Caco-2 (cell line): ENCODE measurements at regions of chr11 and their contacts with region 1.

Region 1: DNA sequence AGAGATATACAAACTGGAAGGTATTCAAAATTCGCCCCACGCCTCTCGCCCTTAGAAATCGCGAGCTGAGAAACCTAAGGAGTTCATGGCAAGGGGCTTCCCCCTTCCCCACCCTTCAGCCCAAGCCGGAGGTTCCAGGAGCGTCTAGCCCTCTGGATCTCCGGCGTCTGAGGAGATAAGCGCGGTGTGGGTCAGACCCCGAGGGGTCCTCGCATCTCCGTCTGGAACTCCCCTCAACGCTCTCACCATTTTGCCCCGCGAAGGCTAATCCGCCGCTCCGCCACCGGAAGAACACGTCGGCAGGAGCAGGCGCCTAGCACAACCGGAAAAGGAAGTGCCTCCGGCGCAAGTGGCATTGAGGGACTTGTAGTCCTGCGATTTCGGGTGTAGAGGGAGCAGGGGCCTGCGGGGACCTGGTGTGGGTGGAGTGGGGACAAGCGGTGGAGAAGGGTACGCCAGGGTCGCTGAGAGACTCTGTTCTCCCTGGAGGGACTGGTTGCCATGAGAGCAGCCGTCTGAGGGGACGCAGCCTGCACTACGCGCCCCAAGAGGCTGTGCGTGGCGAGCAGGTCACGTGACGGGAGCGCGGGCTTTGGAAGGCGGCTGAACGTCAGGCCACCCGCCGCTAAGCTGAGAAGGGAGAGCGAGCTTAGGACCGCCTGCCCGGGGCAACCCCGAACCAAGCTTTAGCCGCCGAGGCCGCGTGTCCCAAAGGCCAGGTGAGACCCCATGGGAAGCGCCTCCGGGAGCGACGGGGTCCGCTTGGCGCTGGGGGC is at the starts of genes FEN1 and TMEM258:
- DNase-seq: peak; percentile 90 to 91
- H3K4me3 ChIP-seq: peak within 1 kb of the TSS; percentile 54
- H3K4me3 Mint-ChIP-seq: peak within 1 kb of the TSS; percentile 96
- H3K27ac Mint-ChIP-seq: peak within 1 kb of the TSS; percentile 100
- H3K4me1 ChIP-seq: peaks cover 5% of the 10 kb centered on the region; the same call in 1 of the 2 replicates
- H3K4me1 Mint-ChIP-seq: peaks cover 21% of the 10 kb centered on the region
- H3K27me3 ChIP-seq: no peaks in the 10 kb centered on the region
- H3K27me3 Mint-ChIP-seq: no peaks in the 10 kb centered on the region
- CTCF ChIP-seq: no peak
- total RNA-seq, gene FEN1: 83.4 and 86.1 TPM in 2 replicates
- total RNA-seq, gene TMEM258: 190 and 197 TPM in 2 replicates

Region 2: GRCh38 chr11:61747192-61747966 is 45.1 kb before region 1 on chr11:
- CTCF ChIA-PET with region 1: interaction called, 78 read pairs
- POLR2A ChIA-PET with region 1: interaction called, 4 read pairs
- intact Hi-C with region 1: loop called (anchors 1 kb)
- DNase-seq: peak; percentile 86 to 92
- H3K4me3 ChIP-seq: no peak overlapping the region
- H3K4me3 Mint-ChIP-seq: no peak overlapping the region
- H3K27ac Mint-ChIP-seq: no peak overlapping the region
- H3K4me1 ChIP-seq: peaks cover 22% of the 10 kb centered on the region
- H3K4me1 Mint-ChIP-seq: peaks cover 7% of the 10 kb centered on the region
- H3K27me3 ChIP-seq: no peaks in the 10 kb centered on the region
- H3K27me3 Mint-ChIP-seq: no peaks in the 10 kb centered on the region
- CTCF ChIP-seq: peak; percentile 93 to 97

Region 3: DNA sequence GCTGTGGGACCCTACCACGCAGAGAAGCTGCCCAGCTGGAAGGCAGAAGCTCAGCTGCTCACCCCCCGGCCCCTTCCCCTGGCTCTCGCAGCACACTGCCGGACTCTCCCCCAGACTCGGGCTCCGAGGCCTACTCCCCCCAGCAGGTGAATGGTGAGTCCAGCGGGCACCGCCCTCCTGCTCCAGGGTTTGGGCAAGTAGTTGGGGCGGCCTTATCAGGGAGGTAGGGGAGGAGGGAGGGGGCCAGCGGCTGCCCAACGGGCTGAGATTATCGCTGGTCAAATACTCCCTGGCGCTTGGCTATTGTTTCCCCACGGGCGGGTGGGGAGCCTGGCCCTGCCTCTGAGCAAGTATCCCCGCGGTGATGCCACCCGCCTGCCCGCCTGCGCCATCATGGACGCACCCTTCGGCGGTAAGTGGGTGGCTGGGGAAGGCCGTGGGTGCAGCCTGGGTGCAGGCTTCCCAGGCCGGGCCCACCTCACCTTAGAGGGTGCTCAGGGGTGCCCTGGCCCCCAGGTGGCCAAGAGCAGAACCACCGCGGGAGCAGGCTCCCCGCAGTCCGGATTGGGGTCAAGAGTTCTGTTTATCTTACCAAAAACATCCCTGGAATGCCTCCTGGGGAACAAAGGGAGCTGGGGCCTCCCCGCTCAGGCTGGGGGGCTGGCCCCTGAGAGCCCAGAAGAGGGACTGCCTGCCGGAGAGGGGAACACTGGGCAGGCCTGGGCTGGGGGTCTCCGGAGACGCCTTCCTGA is 23.2 kb before region 1 on chr11:
- CTCF ChIA-PET with region 1: interaction called, 28 read pairs
- POLR2A ChIA-PET with region 1: interaction called, 7 read pairs
- intact Hi-C with region 1: no loop called
- DNase-seq: peak; percentile 91 to 92
- H3K4me3 ChIP-seq: peak overlapping the region; percentile 1; the same call in 1 of the 2 replicates
- H3K4me3 Mint-ChIP-seq: peak overlapping the region; percentile 63
- H3K27ac Mint-ChIP-seq: peak overlapping the region; percentile 87
- H3K4me1 ChIP-seq: peaks cover 59% of the 10 kb centered on the region
- H3K4me1 Mint-ChIP-seq: peaks cover 21% of the 10 kb centered on the region
- H3K27me3 ChIP-seq: no peaks in the 10 kb centered on the region
- H3K27me3 Mint-ChIP-seq: no peaks in the 10 kb centered on the region
- CTCF ChIP-seq: peak; percentile 66 to 89

Region 4: DNA sequence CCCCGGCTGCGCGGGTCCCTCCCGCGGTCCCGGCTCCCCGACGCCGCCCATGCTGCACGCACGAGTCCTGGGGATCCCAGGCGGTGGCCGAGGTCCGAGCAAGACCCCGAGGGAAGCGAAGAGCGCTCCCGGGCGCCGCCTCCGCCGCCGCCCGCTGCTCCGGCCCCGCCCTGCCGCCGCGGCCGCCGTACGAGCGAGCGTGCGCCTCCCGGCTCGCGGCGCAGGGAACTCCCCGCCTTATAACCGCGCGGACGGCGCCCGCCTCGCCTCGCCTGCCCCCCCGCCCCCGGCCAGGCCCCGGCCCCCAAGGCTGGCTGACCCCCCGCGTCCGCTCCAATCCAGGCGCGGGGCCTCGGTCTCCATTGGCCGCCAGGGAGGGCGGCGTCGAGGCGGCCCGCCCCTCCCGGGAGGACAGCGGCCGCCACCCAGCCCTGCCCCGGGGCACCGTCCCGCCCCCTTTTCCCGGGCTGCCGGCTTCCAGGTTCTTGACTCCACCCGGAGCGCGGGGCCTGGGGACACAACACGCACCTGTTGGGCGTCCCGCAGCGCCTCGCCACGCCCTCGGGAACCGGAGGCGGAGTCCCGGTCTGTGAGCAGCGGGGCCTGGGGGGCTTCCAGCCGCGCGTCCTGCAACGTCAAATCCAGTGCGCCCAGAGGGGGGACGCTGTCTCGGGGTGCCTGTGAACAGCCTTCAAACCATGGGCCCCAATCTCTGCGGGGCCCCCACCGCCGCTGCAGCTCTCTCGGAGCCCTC is 99.0 kb after region 1 on chr11 and contains the start of gene FADS3:
- CTCF ChIA-PET with region 1: interaction called, 4 read pairs
- POLR2A ChIA-PET with region 1: no interaction called
- intact Hi-C with region 1: loop called (anchors 1 kb)
- DNase-seq: peak; percentile 92 to 96
- H3K4me3 ChIP-seq: peak within 1 kb of the TSS; percentile 90
- H3K4me3 Mint-ChIP-seq: peak within 1 kb of the TSS; percentile 91
- H3K27ac Mint-ChIP-seq: peak within 1 kb of the TSS; percentile 64
- H3K4me1 ChIP-seq: peaks cover 8% of the 10 kb centered on the region
- H3K4me1 Mint-ChIP-seq: no peaks in the 10 kb centered on the region
- H3K27me3 ChIP-seq: no peaks in the 10 kb centered on the region
- H3K27me3 Mint-ChIP-seq: no peaks in the 10 kb centered on the region
- CTCF ChIP-seq: peak in 1 of 2 experiments; percentile 32
- total RNA-seq, gene FADS3: 26.1 and 32.7 TPM in 2 replicates

Region 5: GRCh38 chr11:62069986-62070919 is 277.8 kb after region 1 on chr11:
- CTCF ChIA-PET with region 1: no interaction called
- POLR2A ChIA-PET with region 1: no interaction called
- intact Hi-C with region 1: loop called (anchors 5 kb)
- DNase-seq: no peak
- H3K4me3 ChIP-seq: no peak overlapping the region
- H3K4me3 Mint-ChIP-seq: no peak overlapping the region
- H3K27ac Mint-ChIP-seq: no peak overlapping the region
- H3K4me1 ChIP-seq: no peaks in the 10 kb centered on the region
- H3K4me1 Mint-ChIP-seq: no peaks in the 10 kb centered on the region
- H3K27me3 ChIP-seq: no peaks in the 10 kb centered on the region
- H3K27me3 Mint-ChIP-seq: peaks cover 3% of the 10 kb centered on the region
- CTCF ChIP-seq: no peak

Region 6: DNA sequence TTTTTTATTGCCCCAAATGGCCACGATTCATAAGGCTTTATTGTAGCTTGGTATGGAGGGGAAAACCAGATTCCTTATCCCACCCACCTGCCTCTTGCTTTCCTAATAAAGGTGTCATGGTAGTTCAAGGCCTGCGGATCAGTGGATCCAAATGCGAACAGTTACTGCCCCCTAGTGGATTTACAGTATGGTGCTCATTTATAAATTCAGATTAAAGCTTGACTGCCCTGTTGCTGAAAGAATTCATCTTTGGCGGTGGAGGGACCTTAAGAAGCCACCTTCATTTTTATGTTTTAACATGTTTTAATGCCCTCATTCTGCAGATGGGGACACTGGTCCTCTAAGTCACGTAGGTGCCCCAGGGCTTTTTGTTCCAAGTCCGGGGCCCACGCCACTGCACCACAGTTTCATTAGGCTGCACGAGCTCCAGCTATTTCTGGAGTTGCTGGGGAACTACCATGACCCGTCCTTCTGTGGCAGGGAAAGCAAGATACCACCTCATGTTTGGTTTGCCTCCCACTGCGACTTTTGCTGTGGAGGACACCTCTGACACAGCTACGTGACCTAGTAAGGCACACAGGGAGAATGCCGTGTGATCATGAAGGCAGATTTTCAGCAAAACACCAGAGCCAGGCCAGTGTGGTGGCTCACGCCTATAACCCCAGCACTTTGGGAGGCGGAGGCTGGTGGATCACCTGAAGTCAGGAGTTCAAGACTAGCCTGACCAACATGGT is 315.7 kb after region 1 on chr11:
- CTCF ChIA-PET with region 1: interaction called, 22 read pairs
- POLR2A ChIA-PET with region 1: no interaction called
- intact Hi-C with region 1: loop called (anchors 1 kb)
- DNase-seq: peak in 1 of 2 experiments; percentile 64
- H3K4me3 ChIP-seq: no peak overlapping the region
- H3K4me3 Mint-ChIP-seq: no peak overlapping the region
- H3K27ac Mint-ChIP-seq: no peak overlapping the region
- H3K4me1 ChIP-seq: peaks cover 3% of the 10 kb centered on the region; the same call in 1 of the 2 replicates
- H3K4me1 Mint-ChIP-seq: no peaks in the 10 kb centered on the region
- H3K27me3 ChIP-seq: no peaks in the 10 kb centered on the region
- H3K27me3 Mint-ChIP-seq: no peaks in the 10 kb centered on the region
- CTCF ChIP-seq: peak; percentile 75 to 76